ENCODE measurements at regions of chrX and their contacts with region 1.

Region 1: GRCh38 chrX:9464435-9465371 is at the start of gene TBL1X:
- DNase-seq: peak; percentile 37 to 61
- ATAC-seq: peak; percentile 32 to 40
- H3K4me3 ChIP-seq: peak within 1 kb of the TSS; percentile 64 to 76 (median 72)
- H3K27ac ChIP-seq: peak within 1 kb of the TSS; percentile 85 to 91 (median 90)
- H3K4me1 ChIP-seq: peaks cover 3 to 10% of the 10 kb centered on the region in 2 donors
- H3K27me3 ChIP-seq: peaks cover 0 to 4% (median 0%) of the 10 kb centered on the region in 3 donors
- CTCF ChIP-seq: peak in 1 of 5 experiments; percentile 2
- POLR2A ChIP-seq: peak; percentile 56 to 58
- total RNA-seq, gene TBL1X: 6.7 to 16.8 (median 8.0) TPM

Region 2: GRCh38 chrX:8341814-8342590 is 1122.7 kb before region 1 on chrX:
- in situ Hi-C with region 1: no loop called
- intact Hi-C with region 1: loop called (anchors 10 kb)
- DNase-seq: peak in 1 of 2 donors; percentile 53
- ATAC-seq: peak; percentile 47 to 98
- H3K4me3 ChIP-seq: no peak overlapping the region
- H3K27ac ChIP-seq: peak overlapping the region in 3 of 4 donors; percentile 26 to 67 (median 48)
- H3K4me1 ChIP-seq: no peaks in the 10 kb centered on the region
- H3K27me3 ChIP-seq: no peaks in the 10 kb centered on the region
- CTCF ChIP-seq: no peak
- POLR2A ChIP-seq: no peak

Region 3: DNA sequence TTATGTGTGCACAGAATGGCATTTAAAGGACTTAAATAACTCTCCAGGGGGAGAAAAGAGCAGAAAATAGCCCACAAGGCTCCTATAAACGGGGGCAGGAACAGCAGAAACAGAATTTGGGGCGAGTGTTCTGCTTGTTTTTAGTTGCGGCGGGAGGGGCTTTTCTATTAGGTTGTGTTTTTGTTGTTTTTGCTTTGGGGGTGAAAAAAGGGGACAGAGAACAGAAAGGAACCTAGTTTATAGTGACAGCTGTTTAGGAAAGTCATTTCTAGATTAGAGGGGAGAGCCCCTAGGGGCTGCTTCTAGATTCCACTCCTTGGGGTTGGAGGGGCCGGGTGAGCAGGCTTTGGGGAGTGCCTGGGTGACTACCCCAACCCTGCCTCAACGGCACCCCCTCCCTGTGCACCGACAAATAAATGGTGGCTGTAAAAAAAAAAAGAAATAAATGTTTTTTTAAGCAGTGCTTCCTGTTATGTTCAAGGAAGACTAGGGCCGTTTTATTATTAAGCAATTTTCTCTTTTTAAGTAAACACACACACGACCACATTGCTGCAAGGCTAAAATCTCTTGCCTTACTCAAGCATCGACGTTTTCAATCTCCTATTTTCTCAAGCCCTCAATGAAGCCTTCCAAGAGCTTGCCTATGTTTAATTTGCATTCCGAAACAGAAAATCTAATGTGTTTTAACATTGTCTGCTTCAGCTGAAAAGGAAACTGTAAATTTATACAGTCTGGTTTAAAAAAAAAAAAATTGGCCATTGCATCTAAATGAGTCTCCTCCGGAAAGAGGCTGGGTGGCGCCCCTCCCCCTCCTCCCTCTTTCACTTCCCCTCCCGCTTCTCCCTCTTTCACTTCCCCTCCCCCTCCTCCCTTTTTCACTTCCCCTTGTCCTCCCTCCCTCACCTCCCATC is 123.2 kb before region 1 on chrX:
- in situ Hi-C with region 1: loop called in 3 of 4 experiments (anchors 5 to 10 kb)
- intact Hi-C with region 1: loop called (anchors 1 kb)
- DNase-seq: peak in 1 of 2 donors; percentile 65
- ATAC-seq: peak; percentile 37 to 46
- H3K4me3 ChIP-seq: peak overlapping the region; percentile 7 to 40 (median 18)
- H3K27ac ChIP-seq: peak overlapping the region; percentile 73 to 83 (median 78)
- H3K4me1 ChIP-seq: peaks cover 11 to 28% of the 10 kb centered on the region in 2 donors
- H3K27me3 ChIP-seq: no peaks in the 10 kb centered on the region
- CTCF ChIP-seq: no peak
- POLR2A ChIP-seq: no peak

Region 4: GRCh38 chrX:9439004-9439403 is 25.7 kb before region 1 on chrX:
- in situ Hi-C with region 1: no loop called
- intact Hi-C with region 1: loop called (anchors 2 kb)
- DNase-seq: peak; percentile 3 to 21
- ATAC-seq: peak; percentile 81 to 85
- H3K4me3 ChIP-seq: no peak overlapping the region
- H3K27ac ChIP-seq: peak overlapping the region in 1 of 4 donors; percentile 54
- H3K4me1 ChIP-seq: peaks cover 5 to 6% of the 10 kb centered on the region in 2 donors
- H3K27me3 ChIP-seq: no peaks in the 10 kb centered on the region
- CTCF ChIP-seq: no peak
- POLR2A ChIP-seq: no peak

Region 5: GRCh38 chrX:9515973-9516538 is 51.4 kb after region 1 on chrX:
- in situ Hi-C with region 1: no loop called
- intact Hi-C with region 1: loop called (anchors 5 kb)
- DNase-seq: no peak
- ATAC-seq: no peak
- H3K4me3 ChIP-seq: no peak overlapping the region
- H3K27ac ChIP-seq: no peak overlapping the region
- H3K4me1 ChIP-seq: peaks cover 3 to 14% of the 10 kb centered on the region in 2 donors
- H3K27me3 ChIP-seq: no peaks in the 10 kb centered on the region
- CTCF ChIP-seq: no peak
- POLR2A ChIP-seq: no peak

Region 6: DNA sequence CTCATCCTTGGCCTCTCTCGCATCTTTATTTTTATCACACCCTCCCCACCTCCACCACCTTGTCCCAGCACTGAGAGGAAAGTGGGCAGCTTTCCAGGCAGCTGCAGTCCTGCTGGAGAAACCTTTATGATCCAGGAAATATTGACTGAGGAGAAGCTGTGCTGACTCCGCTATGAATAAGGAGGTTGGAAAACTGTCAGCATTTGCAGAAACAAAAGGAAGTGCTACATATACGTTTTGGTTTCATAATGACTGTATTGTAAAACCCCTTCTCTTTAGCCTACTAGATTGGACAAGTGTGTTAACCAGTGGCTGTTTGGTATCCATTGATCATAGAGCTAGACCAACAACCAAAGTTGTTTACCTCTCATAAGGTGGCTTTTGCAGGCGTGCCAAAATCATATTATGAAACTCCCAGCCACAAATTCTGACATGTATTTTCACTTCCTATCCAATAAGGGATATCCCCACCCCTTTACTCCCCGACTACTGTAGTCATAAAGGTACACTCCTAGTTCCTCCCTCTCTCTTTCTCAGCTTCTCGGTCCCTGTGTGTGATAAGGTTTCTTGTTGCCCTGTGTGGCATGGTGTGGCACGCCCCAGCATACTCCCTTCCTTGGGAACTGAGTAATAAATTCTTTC is 212.5 kb after region 1 on chrX:
- in situ Hi-C with region 1: no loop called
- intact Hi-C with region 1: loop called (anchors 10 kb)
- DNase-seq: no peak
- ATAC-seq: no peak
- H3K4me3 ChIP-seq: no peak overlapping the region
- H3K27ac ChIP-seq: no peak overlapping the region
- H3K4me1 ChIP-seq: no peaks in the 10 kb centered on the region
- H3K27me3 ChIP-seq: no peaks in the 10 kb centered on the region
- CTCF ChIP-seq: no peak
- POLR2A ChIP-seq: no peak

Region 7: GRCh38 chrX:9708904-9709553 is 244.3 kb after region 1 on chrX:
- in situ Hi-C with region 1: no loop called
- intact Hi-C with region 1: loop called (anchors 1 kb)
- DNase-seq: peak; percentile 6 to 44
- ATAC-seq: peak; percentile 33 to 62
- H3K4me3 ChIP-seq: no peak overlapping the region
- H3K27ac ChIP-seq: no peak overlapping the region
- H3K4me1 ChIP-seq: no peaks in the 10 kb centered on the region
- H3K27me3 ChIP-seq: no peaks in the 10 kb centered on the region
- CTCF ChIP-seq: peak; percentile 41 to 89 (median 75)
- POLR2A ChIP-seq: no peak

Measured in gastrocnemius medialis (tissue), 4 donors.